ENCODE measurements at regions of chr16 and their contacts with region 1.

Region 1: GRCh38 chr16:22933173-22933572 is 119.2 kb downstream of the HS3ST2 start:
- DNase-seq: no peak
- H3K4me3 ChIP-seq: no peak overlapping the region
- H3K27ac ChIP-seq: no peak overlapping the region
- H3K4me1 ChIP-seq: no peaks in the 10 kb centered on the region
- H3K27me3 ChIP-seq: no peaks in the 10 kb centered on the region
- CTCF ChIP-seq: no peak
- EP300 ChIP-seq: no peak
- POLR2A ChIP-seq: no peak

Region 2: DNA sequence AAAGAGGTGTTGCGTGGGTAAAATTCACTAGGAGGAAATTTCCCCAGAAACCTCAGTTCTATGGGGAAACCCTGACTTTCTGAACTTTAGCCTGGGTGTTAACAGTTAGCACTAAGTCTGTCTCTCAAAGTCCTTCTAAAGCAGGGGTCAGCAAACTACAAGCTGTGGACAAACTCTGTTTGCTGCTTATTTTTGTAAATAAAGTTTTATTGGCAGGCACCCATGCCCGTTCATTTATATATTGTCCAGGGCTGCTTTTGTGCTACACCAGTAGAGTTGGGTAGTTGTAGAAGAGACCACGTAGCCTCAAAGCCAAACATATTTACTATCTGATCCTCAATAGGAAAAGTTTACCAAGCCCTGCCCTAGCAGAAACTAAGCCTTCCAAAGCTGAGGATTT is 56.4 kb after region 1 on chr16:
- intact Hi-C with region 1: loop called in 1 of 4 experiments (anchors 10 kb)
- DNase-seq: no peak
- H3K4me3 ChIP-seq: no peak overlapping the region
- H3K27ac ChIP-seq: no peak overlapping the region
- H3K4me1 ChIP-seq: no peaks in the 10 kb centered on the region
- H3K27me3 ChIP-seq: no peaks in the 10 kb centered on the region
- CTCF ChIP-seq: no peak
- EP300 ChIP-seq: no peak
- POLR2A ChIP-seq: no peak